ENCODE measurements at regions of chr17 and their contacts with region 1.

Region 1: GRCh38 chr17:1673041-1673785 is 11.5 kb downstream of the PRPF8 start:
- DNase-seq: no peak
- H3K4me3 ChIP-seq: no peak overlapping the region
- H3K27me3 ChIP-seq: no peaks in the 10 kb centered on the region
- CTCF ChIP-seq: no peak

Region 2: DNA sequence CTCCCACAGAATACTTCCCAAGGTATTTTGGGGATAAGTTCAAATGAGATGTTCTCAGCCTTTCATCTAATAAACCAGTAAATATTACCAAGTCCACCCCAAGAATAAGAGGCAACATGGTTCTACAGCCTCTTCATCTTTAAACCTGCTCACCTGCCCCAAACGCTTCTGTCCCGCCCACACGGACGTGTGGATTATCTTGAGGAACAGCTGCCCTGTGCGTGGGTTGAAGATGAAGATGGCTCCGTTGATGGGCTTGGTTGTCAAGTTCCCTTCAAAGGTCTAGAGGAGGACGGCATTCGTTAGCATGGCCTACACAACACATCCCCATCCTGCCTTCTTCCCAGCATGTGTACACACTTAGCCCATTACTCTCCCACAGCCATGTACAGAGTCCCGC is 15.1 kb before region 1 on chr17:
- CTCF ChIA-PET with region 1: interaction called, 11 read pairs
- POLR2A ChIA-PET with region 1: interaction called, 3 read pairs
- DNase-seq: no peak
- H3K4me3 ChIP-seq: no peak overlapping the region
- H3K27me3 ChIP-seq: no peaks in the 10 kb centered on the region
- CTCF ChIP-seq: no peak

Region 3: DNA sequence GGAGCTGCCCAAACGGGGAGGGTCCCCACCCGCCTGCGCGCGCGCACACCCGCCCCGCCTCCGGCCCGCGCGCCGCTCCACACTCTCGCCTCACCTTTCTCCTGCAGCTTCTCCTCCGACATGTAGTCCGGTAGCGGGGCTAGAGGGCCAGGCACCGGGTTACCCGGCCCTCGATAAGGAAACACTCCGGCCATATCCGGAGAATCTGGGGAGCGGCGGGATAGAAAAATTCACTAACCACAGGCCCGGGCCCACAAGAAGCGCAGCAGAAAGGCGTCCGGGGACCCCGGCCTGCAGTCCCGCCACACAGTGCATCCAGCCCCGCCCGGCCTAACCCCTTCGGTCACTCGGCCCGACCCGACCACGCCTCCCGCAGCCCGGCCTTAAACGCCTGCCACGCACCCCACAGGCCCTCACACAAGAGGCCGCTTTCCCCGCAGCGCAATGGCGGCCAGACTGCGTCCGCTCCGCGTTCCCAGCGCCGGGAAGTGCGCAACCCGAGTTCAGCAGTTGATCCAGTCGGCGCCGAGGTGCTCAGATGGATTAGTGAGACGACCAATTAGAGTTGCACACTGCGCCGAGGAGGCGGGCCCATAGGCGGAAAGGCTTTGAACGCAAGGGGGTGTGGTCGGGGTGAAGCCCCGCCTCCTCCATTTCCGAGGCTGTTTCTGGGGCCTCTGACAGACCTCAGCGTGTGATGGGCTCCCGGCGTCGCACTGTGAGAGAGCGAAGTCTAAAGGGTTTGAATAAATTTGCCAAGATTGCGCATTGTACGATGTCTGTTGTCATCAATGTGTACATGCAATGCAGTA is 11.4 kb after region 1 on chr17 and contains the start of gene PRPF8:
- CTCF ChIA-PET with region 1: interaction called, 13 read pairs
- POLR2A ChIA-PET with region 1: no interaction called
- DNase-seq: peak; percentile 87
- H3K4me3 ChIP-seq: peak within 1 kb of the TSS; percentile 97
- H3K27me3 ChIP-seq: no peaks in the 10 kb centered on the region
- CTCF ChIP-seq: no peak
- polyA plus RNA-seq, gene PRPF8: 113 and 194 TPM in 2 replicates

Region 4: DNA sequence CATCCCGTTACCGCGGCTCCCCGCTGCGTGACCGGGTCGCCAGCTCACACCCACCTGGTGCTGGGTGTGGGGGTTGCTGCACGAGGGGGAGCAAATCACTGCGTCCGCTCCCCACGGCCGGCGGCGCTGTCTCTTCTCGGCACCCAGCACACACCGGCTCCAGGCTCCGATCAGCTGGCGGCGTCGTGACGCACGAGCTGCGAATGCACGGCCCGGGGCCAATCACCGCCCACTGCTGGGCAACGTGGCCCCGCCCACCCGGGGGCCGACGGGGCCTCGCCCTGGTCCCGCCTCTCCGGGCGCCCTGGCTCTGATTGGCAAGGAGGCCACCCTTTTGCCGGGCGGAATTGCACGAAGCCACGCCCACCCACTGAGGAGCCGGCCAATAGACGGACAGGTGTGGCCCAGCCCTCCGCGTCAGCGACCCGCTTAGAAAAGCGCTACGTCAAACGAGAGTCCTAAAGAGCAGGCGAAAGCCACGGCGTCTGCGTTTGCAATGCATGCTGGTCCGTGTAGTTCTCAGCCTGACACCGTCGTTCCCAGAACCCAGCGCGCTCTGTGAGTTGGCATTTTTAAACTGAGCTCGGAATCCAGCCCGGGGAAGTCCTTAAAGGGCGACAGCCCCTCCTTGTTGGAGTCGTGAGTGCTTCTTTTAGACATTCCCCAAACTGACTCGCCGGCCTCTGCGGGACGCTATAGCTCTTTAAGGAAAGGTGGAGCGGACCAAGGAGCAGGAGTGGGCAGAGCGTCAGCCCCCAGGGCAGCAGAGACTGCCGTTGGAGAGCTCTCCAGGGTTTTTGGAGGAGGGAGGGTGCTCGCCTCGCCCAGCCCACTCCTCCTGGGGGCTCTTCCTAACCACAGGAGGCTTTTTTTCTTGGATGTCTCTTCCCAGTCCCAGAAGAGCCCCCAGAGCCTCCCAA is 43.1 kb after region 1 on chr17:
- CTCF ChIA-PET with region 1: interaction called, 21 read pairs
- POLR2A ChIA-PET with region 1: interaction called, 5 read pairs
- DNase-seq: peak; percentile 100
- H3K4me3 ChIP-seq: peak overlapping the region; percentile 97
- H3K27me3 ChIP-seq: no peaks in the 10 kb centered on the region
- CTCF ChIP-seq: peak; percentile 37

Region 5: DNA sequence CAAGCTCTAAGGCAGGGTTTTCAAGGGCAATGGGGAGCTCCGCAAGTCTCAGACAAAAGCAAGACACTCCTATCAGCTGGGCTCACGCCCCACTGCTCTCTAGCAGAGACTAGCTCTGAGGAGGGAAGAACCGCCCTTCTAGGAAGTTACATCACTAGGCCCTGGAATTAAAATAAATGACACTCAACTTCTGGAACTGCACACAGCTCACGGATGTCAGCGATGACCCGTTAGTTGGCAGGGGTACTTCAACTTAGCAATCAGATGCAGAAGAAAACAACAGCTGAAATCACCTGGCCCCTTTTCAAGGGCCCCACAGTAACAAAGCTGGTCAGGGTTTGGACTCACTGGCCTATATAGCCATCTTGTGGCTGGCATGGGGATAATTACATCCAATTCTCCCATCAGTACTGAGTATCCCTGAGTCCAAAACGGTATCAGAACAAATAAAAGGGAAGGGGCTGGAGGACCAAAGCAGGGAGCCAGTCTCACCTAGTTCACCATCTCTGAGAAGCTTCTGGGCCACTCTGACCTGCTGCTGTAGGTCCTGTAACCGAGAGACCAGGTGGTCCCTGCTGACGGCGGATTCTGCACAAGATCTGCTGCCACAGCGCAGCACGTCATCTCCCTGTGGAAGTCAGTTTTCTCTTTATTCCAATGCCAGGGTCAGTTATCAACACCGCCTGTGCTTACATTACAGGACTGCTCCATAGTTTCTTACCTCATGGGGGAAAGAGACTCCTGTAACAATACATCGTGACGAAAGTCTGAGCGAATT is 110.8 kb after region 1 on chr17:
- CTCF ChIA-PET with region 1: interaction called, 20 read pairs
- POLR2A ChIA-PET with region 1: no interaction called
- DNase-seq: no peak
- H3K4me3 ChIP-seq: no peak overlapping the region
- H3K27me3 ChIP-seq: no peaks in the 10 kb centered on the region
- CTCF ChIP-seq: peak; percentile 84

Measured in BJ (cell line).